GM12878 (cell line): ENCODE measurements at regions of chr4 and their contacts with region 1.

Region 1: GRCh38 chr4:40719008-40719623 is 30.6 kb upstream of the NSUN7 start:
- DNase-seq: peak; percentile 71
- ATAC-seq: peak; percentile 88
- H3K4me3 ChIP-seq: no peak overlapping the region
- H3K27ac ChIP-seq: no peak overlapping the region
- H3K4me1 ChIP-seq: peaks cover 26% of the 10 kb centered on the region
- H3K27me3 ChIP-seq: no peaks in the 10 kb centered on the region
- CTCF ChIP-seq: peak; percentile 73 to 91 (median 87)
- EP300 ChIP-seq: no peak
- POLR2A ChIP-seq: no peak
- RAD21 ChIP-seq: peak; percentile 95

Region 2: GRCh38 chr4:40199999-40200874 is 518.9 kb before region 1 on chr4:
- CTCF ChIA-PET with region 1: no interaction called
- POLR2A ChIA-PET with region 1: no interaction called
- RAD21 ChIA-PET with region 1: no interaction called
- SMC1A ChIA-PET with region 1: no interaction called
- in situ Hi-C with region 1: no loop called
- intact Hi-C with region 1: loop called (anchors 10 kb)
- DNase-seq: peak; percentile 93
- ATAC-seq: peak; percentile 52
- H3K4me3 ChIP-seq: peak overlapping the region; percentile 88
- H3K27ac ChIP-seq: peak overlapping the region; percentile 92
- H3K4me1 ChIP-seq: peaks cover 8% of the 10 kb centered on the region
- H3K27me3 ChIP-seq: no peaks in the 10 kb centered on the region
- CTCF ChIP-seq: no peak
- EP300 ChIP-seq: peak; percentile 79 to 93
- POLR2A ChIP-seq: peak; percentile 79
- RAD21 ChIP-seq: no peak

Region 3: DNA sequence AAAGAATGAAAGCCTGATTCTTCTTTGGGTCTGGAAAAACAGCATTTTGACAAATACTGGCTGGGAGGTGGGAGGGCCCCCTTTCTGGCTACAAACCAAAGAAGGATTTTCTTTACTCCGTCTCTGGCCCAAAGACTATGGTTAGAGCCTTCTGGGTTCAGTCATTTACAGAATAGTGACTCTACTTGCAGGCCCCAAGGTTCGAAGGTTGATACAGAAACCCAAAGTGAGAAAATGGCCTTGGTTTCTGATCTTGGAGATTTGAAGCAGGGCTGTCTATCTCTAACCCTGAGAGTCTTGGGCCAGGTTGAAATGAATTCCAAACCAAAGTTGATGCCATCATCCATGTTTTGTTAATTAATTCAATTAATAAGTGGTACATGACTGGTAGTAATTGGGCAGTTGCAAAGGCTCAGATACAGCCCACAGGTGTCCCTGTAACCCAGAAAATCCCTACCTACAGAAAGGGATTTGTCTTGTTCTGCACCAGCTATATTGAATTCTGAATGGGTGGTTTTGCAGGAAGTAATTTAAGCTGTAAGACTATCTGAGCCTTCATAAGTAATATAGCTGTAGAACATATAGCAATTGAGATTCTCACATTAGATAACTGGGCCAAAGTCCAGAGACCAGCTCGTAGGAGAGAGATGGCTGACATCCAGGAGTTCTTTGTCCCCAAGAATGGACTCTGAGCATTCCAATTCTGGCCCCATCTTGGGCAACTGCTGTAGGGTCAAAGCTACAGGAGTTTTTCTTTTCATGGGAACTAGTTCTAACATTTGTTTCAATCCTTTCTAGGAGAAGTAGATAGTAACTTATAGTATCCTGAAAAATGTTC is 349.5 kb before region 1 on chr4:
- CTCF ChIA-PET with region 1: interaction called, 13 read pairs
- POLR2A ChIA-PET with region 1: no interaction called
- RAD21 ChIA-PET with region 1: interaction called, 9 read pairs
- SMC1A ChIA-PET with region 1: interaction called, 15 read pairs
- in situ Hi-C with region 1: no loop called
- intact Hi-C with region 1: no loop called
- DNase-seq: no peak
- ATAC-seq: peak; percentile 29
- H3K4me3 ChIP-seq: no peak overlapping the region
- H3K27ac ChIP-seq: no peak overlapping the region
- H3K4me1 ChIP-seq: no peaks in the 10 kb centered on the region
- H3K27me3 ChIP-seq: no peaks in the 10 kb centered on the region
- CTCF ChIP-seq: peak in 1 of 3 experiments; percentile 28; a peak in 2 of 6 replicates
- EP300 ChIP-seq: no peak
- POLR2A ChIP-seq: no peak
- RAD21 ChIP-seq: peak; percentile 5; the same call in 1 of the 2 replicates

Region 4: DNA sequence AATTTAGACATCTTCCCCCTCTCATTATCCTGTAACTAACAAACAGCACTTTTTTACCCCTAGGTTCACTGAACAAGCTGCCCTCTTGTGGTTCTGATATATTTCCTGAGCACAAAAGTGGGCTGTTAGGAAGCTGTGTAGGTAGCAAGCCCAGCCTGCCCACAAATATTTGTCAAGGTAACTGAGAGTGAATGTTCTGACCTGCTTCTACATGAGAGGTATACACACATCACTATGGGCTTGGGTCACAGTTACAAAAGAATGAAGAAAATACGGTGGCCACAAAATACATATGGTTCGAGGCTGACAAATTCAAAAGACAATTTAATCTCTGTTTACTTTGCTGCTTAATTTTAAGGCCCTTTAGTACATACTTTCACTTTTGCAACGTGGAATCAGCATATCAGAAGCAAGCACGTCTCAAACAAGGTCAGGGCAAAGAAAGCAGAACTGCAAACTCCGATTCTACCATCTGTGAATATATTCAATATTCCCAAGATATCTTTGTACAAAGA is 168.1 kb before region 1 on chr4:
- CTCF ChIA-PET with region 1: interaction called, 46 read pairs
- POLR2A ChIA-PET with region 1: no interaction called
- RAD21 ChIA-PET with region 1: interaction called, 17 read pairs
- SMC1A ChIA-PET with region 1: interaction called, 34 read pairs
- in situ Hi-C with region 1: loop called (anchors 5 kb)
- intact Hi-C with region 1: loop called (anchors 2 kb)
- DNase-seq: peak; percentile 76
- ATAC-seq: peak; percentile 89
- H3K4me3 ChIP-seq: peak overlapping the region; percentile 20
- H3K27ac ChIP-seq: peak overlapping the region; percentile 47
- H3K4me1 ChIP-seq: peaks cover 18% of the 10 kb centered on the region; the same call in 1 of the 2 replicates
- H3K27me3 ChIP-seq: no peaks in the 10 kb centered on the region
- CTCF ChIP-seq: peak; percentile 42 to 53 (median 47); a peak in 5 of 6 replicates
- EP300 ChIP-seq: peak in 1 of 2 experiments; percentile 6; a peak in 1 of 4 replicates
- POLR2A ChIP-seq: no peak
- RAD21 ChIP-seq: peak; percentile 71

Region 5: GRCh38 chr4:40621592-40622512 is 97.3 kb before region 1 on chr4:
- CTCF ChIA-PET with region 1: interaction called, 22 read pairs
- POLR2A ChIA-PET with region 1: no interaction called
- RAD21 ChIA-PET with region 1: interaction called, 57 read pairs
- SMC1A ChIA-PET with region 1: interaction called, 32 read pairs
- in situ Hi-C with region 1: no loop called
- intact Hi-C with region 1: loop called (anchors 1 kb)
- DNase-seq: peak; percentile 93
- ATAC-seq: peak; percentile 66
- H3K4me3 ChIP-seq: peak overlapping the region; percentile 58
- H3K27ac ChIP-seq: peak overlapping the region; percentile 93
- H3K4me1 ChIP-seq: peaks cover 38% of the 10 kb centered on the region
- H3K27me3 ChIP-seq: no peaks in the 10 kb centered on the region
- CTCF ChIP-seq: no peak
- EP300 ChIP-seq: peak; percentile 74 to 81
- POLR2A ChIP-seq: no peak; the same call in 1 of the 2 replicates
- RAD21 ChIP-seq: 0 out of 2 replicates have a peak, but pooled peaks have one; percentile 13

Region 6: DNA sequence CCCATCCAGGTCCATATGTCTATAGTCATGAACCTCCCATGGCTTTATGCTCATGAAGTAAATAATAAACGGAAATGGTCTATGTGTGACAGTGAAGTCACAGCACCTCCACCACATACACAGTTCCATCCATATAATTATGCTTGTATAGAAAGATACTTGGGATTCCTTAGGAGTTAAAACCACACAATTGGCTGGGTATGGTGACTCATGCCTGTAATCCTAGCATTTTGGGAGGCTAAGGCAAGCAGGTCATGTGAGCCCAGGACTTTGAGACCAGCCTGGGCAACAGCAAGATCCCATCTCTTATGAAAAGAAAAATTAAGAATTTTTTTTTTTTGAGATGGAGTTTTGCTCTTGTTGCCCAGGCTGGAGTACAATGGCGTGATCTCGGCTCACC is 33.8 kb before region 1 on chr4:
- CTCF ChIA-PET with region 1: interaction called, 7 read pairs
- POLR2A ChIA-PET with region 1: interaction called, 5 read pairs
- RAD21 ChIA-PET with region 1: interaction called, 5 read pairs
- SMC1A ChIA-PET with region 1: interaction called, 16 read pairs
- in situ Hi-C with region 1: no loop called
- intact Hi-C with region 1: no loop called
- DNase-seq: no peak
- ATAC-seq: no peak
- H3K4me3 ChIP-seq: no peak overlapping the region
- H3K27ac ChIP-seq: no peak overlapping the region
- H3K4me1 ChIP-seq: peaks cover 5% of the 10 kb centered on the region
- H3K27me3 ChIP-seq: no peaks in the 10 kb centered on the region
- CTCF ChIP-seq: no peak
- EP300 ChIP-seq: no peak
- POLR2A ChIP-seq: no peak
- RAD21 ChIP-seq: no peak

Region 7: GRCh38 chr4:40831146-40831907 is 112.2 kb after region 1 on chr4:
- CTCF ChIA-PET with region 1: no interaction called
- POLR2A ChIA-PET with region 1: no interaction called
- RAD21 ChIA-PET with region 1: no interaction called
- SMC1A ChIA-PET with region 1: no interaction called
- in situ Hi-C with region 1: no loop called
- intact Hi-C with region 1: no loop called
- DNase-seq: no peak
- ATAC-seq: no peak
- H3K4me3 ChIP-seq: no peak overlapping the region
- H3K27ac ChIP-seq: no peak overlapping the region
- H3K4me1 ChIP-seq: no peaks in the 10 kb centered on the region
- H3K27me3 ChIP-seq: no peaks in the 10 kb centered on the region
- CTCF ChIP-seq: no peak
- EP300 ChIP-seq: no peak
- POLR2A ChIP-seq: no peak
- RAD21 ChIP-seq: no peak

Region 8: GRCh38 chr4:41044165-41044564 is 325.0 kb after region 1 on chr4:
- CTCF ChIA-PET with region 1: no interaction called
- POLR2A ChIA-PET with region 1: no interaction called
- RAD21 ChIA-PET with region 1: no interaction called
- SMC1A ChIA-PET with region 1: no interaction called
- in situ Hi-C with region 1: no loop called
- intact Hi-C with region 1: no loop called
- DNase-seq: no peak
- ATAC-seq: no peak
- H3K4me3 ChIP-seq: no peak overlapping the region
- H3K27ac ChIP-seq: no peak overlapping the region
- H3K4me1 ChIP-seq: no peaks in the 10 kb centered on the region
- H3K27me3 ChIP-seq: no peaks in the 10 kb centered on the region
- CTCF ChIP-seq: no peak
- EP300 ChIP-seq: no peak
- POLR2A ChIP-seq: no peak
- RAD21 ChIP-seq: no peak